ENCODE measurements at regions of chr13 and their contacts with region 1.

Region 1: DNA sequence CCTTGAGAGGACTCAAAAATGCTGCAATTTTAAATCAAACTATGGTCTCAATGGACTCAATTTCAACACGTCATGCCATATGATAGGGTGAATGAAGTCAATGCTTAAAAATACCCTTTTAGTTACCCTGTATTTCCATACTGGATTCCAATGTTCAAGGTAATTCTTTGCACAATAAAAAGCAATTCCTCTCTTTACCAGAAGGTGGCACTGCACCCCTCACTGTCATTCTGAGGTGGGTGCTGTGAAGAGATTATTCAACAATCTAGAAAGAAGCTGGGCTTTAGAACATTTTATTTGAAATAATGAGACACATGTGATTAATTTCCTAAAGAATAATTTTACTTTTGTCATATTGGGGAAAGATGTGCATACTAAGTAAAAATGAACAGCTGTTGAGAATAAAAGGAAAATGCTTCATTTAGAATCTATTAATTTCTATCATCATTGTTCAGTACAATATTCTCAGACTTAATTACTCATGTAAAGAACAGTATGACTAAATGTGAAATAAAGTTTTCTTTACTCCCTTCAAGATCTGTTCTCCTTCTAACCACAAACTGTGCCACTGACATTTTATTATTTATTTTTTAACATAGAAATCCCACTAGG is 789.1 kb downstream of the GPC5 start:
- DNase-seq: peak; percentile 84
- H3K4me3 ChIP-seq: no peak overlapping the region
- H3K27ac ChIP-seq: no peak overlapping the region
- H3K4me1 ChIP-seq: no peaks in the 10 kb centered on the region
- CTCF ChIP-seq: no peak

Region 2: GRCh38 chr13:91747186-91747585 is 440.3 kb before region 1 on chr13:
- CTCF ChIA-PET with region 1: no interaction called
- POLR2A ChIA-PET with region 1: no interaction called
- intact Hi-C with region 1: no loop called
- DNase-seq: no peak
- H3K4me3 ChIP-seq: no peak overlapping the region
- H3K27ac ChIP-seq: no peak overlapping the region
- H3K4me1 ChIP-seq: no peaks in the 10 kb centered on the region
- CTCF ChIP-seq: no peak

Region 3: DNA sequence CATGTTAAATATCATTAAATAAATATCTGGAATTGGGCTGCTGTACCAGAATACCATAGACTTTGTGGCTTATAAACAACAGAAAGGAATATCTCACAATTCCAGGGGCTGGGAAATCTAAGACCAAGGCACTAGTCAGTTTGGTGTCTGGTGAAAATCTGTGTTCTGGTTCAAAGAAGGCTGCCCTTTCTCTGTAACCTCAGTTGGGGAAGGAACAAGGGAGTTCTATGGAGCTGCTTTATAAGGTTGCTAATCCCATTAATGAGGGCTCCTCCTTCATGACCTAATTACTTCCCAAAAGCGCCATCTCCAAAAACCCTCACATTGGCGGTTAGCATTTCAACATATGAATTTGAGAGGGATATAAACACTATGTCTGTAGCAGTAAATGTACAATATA is 308.1 kb before region 1 on chr13:
- CTCF ChIA-PET with region 1: no interaction called
- POLR2A ChIA-PET with region 1: no interaction called
- intact Hi-C with region 1: loop called (anchors 5 kb)
- DNase-seq: no peak
- H3K4me3 ChIP-seq: no peak overlapping the region
- H3K27ac ChIP-seq: no peak overlapping the region
- H3K4me1 ChIP-seq: no peaks in the 10 kb centered on the region
- CTCF ChIP-seq: no peak

Region 4: GRCh38 chr13:91946498-91947070 is 240.9 kb before region 1 on chr13:
- CTCF ChIA-PET with region 1: no interaction called
- POLR2A ChIA-PET with region 1: no interaction called
- intact Hi-C with region 1: loop called (anchors 2 kb)
- DNase-seq: peak; percentile 64
- H3K4me3 ChIP-seq: no peak overlapping the region
- H3K27ac ChIP-seq: no peak overlapping the region
- H3K4me1 ChIP-seq: no peaks in the 10 kb centered on the region
- CTCF ChIP-seq: no peak

Region 5: GRCh38 chr13:92175330-92175729 is 12.2 kb before region 1 on chr13:
- CTCF ChIA-PET with region 1: interaction called, 5 read pairs
- POLR2A ChIA-PET with region 1: interaction called, 20 read pairs
- intact Hi-C with region 1: no loop called
- DNase-seq: peak; percentile 51
- H3K4me3 ChIP-seq: no peak overlapping the region
- H3K27ac ChIP-seq: no peak overlapping the region
- H3K4me1 ChIP-seq: no peaks in the 10 kb centered on the region
- CTCF ChIP-seq: no peak

Region 6: DNA sequence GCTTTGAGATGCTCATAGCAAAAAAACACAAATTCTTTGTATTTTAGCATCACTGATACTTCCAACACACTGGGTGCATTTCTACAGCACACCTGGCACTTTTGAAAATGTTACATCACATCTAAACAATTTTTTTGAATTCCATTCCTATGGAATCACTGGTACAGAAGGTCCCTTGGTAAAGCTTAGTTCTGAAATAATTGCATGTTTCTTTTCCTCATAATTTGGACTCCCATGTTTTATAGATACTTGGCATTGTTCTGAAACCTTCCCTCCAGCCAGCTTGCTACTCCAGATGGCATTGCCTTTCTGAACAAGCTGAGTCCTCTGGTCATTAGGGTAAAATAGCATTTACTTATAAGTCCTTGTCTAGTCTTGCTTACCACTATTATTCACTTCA is 557.8 kb after region 1 on chr13:
- CTCF ChIA-PET with region 1: no interaction called
- POLR2A ChIA-PET with region 1: no interaction called
- intact Hi-C with region 1: no loop called
- DNase-seq: no peak
- H3K4me3 ChIP-seq: no peak overlapping the region
- H3K27ac ChIP-seq: no peak overlapping the region
- H3K4me1 ChIP-seq: no peaks in the 10 kb centered on the region
- CTCF ChIP-seq: no peak

Measured in OCI-LY7 (cell line).